ENCODE measurements at regions of chr4 and their contacts with region 1.

Region 1: GRCh38 chr4:7206911-7207567 is 14.7 kb downstream of the SORCS2 start:
- DNase-seq: peak; percentile 80 to 85
- ATAC-seq: peak; percentile 96 to 98 (median 97)
- H3K4me3 ChIP-seq: no peak overlapping the region
- H3K27ac ChIP-seq: peak overlapping the region; percentile 13 to 81 (median 67)
- H3K4me1 ChIP-seq: peaks cover 2 to 38% (median 24%) of the 10 kb centered on the region in 9 donors
- H3K27me3 ChIP-seq: peaks cover 0 to 13% (median 0%) of the 10 kb centered on the region in 7 donors
- CTCF ChIP-seq: no peak

Region 2: DNA sequence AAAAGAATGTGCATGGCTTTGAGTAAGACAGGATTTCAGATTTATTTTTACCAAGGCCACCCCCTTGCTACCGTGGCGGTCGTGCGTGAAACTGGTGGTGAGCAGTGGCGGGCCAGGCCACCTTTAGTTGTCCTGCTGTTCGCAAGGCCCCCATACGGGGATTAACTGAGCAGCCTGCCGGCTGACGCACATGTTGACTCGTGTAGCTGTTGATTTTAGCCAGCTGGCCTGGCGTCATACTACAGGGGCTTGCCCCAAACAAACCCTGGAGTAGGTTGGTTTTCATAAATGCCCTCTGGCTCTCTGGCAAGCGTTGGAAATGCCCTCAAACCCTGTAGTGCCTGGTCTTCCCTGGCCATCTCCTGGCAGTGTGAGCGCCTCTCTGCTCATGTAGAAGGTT is 909.0 kb before region 1 on chr4:
- intact Hi-C with region 1: no loop called
- DNase-seq: no peak
- ATAC-seq: no peak
- H3K4me3 ChIP-seq: no peak overlapping the region
- H3K27ac ChIP-seq: no peak overlapping the region
- H3K4me1 ChIP-seq: no peaks in the 10 kb centered on the region
- H3K27me3 ChIP-seq: no peaks in the 10 kb centered on the region
- CTCF ChIP-seq: no peak

Region 3: GRCh38 chr4:7042697-7043464 is 164.2 kb before region 1 on chr4 and contains the start of gene TADA2B:
- intact Hi-C with region 1: no loop called
- DNase-seq: peak; percentile 96 to 98
- ATAC-seq: peak; percentile 94 to 97 (median 97)
- H3K4me3 ChIP-seq: peak within 1 kb of the TSS; percentile 83 to 100 (median 99)
- H3K27ac ChIP-seq: peak within 1 kb of the TSS; percentile 86 to 96 (median 94)
- H3K4me1 ChIP-seq: peaks cover 21 to 55% (median 51%) of the 10 kb centered on the region in 9 donors
- H3K27me3 ChIP-seq: no peaks in the 10 kb centered on the region
- CTCF ChIP-seq: peak in 8 of 9 donors; percentile 28 to 57 (median 44)
- total RNA-seq, gene TADA2B: 26.2 to 40.8 (median 31.5) TPM

Region 4: DNA sequence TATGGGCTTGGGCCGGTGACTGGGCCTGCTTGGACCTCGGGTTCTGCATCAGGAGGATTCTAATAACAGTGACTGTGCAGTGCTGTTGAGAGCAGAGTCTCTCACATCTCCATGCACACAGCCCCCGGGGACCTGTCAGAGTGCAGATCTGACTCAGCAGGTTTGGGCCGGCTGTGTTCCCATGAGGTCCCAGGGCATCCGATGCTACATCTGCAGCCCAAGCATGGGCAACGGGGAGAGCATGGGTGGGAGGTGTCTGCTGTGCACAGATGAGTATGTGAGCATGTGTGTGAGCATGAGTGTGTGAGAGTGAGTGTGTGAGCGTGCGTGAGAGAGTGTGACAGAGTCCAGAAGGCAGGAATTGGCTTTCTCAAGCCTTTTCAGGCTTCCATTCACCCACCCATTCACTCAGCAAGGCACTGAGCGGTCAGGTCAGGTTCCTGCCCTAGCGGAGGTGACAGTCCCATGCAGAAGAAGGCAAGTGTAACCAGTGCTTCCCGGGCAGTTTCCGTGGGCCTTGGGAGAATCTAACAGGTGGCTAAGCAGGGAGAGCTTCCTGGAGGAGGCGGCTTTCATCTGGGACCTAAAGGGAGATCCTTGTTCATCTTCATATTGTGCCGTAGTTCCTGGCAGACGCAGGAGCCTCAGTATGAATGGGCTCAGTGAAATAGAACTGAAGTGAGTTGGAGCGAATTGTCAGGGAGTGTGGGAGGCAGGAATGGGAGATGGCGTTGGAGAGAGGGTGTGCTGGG is 47.9 kb after region 1 on chr4:
- intact Hi-C with region 1: loop called in 2 of 10 experiments (anchors 5 kb)
- DNase-seq: peak; percentile 25 to 36
- ATAC-seq: peak in 1 of 8 donors; percentile 8
- H3K4me3 ChIP-seq: no peak overlapping the region
- H3K27ac ChIP-seq: no peak overlapping the region
- H3K4me1 ChIP-seq: peaks cover 0 to 41% (median 11%) of the 10 kb centered on the region in 9 donors
- H3K27me3 ChIP-seq: no peaks in the 10 kb centered on the region
- CTCF ChIP-seq: no peak

Measured in heart right ventricle (tissue), 16 donors.